Mammary epithelial cell (primary cell): ENCODE measurements at regions of chr11 and their contacts with region 1.

Region 1: DNA sequence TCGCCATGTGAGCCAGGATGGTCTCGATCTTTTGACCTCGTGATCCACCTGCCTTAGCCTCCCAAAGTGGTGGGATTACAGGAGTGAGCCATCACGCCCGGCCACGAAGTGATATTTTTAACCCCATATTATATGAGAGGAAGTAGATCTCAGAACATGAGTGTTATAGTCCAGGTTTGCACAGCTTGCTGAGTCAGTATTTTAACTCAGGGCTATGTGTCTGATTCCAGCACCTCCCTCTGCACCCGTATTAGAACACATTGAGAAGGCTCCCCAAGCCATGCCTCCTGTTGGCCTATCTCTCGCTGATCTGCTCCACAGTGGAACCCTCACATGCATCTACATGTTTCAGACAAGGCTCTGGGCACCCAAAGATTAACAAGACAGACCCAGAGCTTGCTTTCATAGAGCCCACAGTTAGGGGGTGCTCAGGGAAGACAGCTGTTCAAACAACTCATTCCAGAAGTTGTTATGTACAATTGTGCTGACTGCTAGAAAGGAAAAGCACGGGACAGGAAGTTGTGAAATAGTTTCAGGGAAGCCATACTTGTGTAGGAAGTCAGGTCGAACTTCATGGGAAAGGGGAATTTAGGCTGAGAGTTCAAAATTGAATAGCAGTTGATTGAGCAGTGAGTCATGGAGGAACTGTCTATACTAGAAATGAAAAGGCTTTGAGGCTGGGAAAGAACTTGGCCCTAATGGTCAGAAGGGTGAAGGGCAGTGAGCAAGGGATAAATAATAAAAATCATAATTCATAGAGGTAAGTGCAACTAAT is 49.3 kb upstream of the CLPB start:
- DNase-seq: peak; percentile 56
- H3K4me3 ChIP-seq: no peak overlapping the region
- H3K27ac ChIP-seq: no peak overlapping the region
- H3K4me1 ChIP-seq: peaks cover 9% of the 10 kb centered on the region
- H3K27me3 ChIP-seq: no peaks in the 10 kb centered on the region
- CTCF ChIP-seq: no peak

Region 2: DNA sequence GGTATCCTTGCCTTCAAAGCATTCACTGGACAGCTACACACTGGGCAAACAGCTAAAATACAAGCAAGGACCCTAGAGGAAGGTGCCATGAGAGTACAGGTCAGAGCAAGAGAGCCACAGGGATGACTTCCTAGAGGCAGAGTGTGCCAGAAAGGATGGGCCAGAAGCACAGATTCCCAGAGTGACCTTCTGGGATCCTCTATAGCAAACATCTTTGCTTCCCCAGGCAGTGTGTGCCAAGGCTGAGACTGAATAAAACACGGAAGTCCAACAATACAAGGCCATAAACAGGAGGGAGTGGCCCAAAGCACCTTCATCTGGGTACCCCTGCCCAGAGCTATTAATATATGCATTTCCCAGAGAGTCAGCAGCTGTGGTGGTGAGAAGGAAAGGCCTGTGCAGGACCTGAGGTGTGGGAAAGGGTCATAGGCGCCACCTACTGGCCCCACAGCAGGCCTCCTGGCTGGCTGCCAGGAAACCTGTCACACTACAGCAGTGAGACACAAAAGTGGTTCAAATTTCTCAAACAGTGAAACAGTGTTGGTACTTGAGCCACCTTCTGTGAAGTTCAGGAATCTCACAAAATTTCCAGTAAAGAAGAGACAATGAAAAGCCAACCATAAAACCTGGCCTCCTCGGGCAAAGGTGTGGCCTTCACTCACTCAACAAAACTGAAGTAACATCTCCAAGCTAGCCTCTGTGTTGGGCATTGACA is 69.5 kb before region 1 on chr11:
- CTCF ChIA-PET with region 1: no interaction called
- dilution Hi-C with region 1: no loop called
- in situ Hi-C with region 1: no loop called
- intact Hi-C with region 1: no loop called
- DNase-seq: peak; percentile 62
- H3K4me3 ChIP-seq: no peak overlapping the region
- H3K27ac ChIP-seq: no peak overlapping the region
- H3K4me1 ChIP-seq: no peaks in the 10 kb centered on the region
- H3K27me3 ChIP-seq: no peaks in the 10 kb centered on the region
- CTCF ChIP-seq: peak; percentile 79 to 94

Region 3: GRCh38 chr11:72573072-72573854 is 89.7 kb after region 1 on chr11:
- CTCF ChIA-PET with region 1: no interaction called
- dilution Hi-C with region 1: no loop called
- in situ Hi-C with region 1: loop called (anchors 5 kb)
- intact Hi-C with region 1: loop called (anchors 1 kb)
- DNase-seq: no peak
- H3K4me3 ChIP-seq: no peak overlapping the region
- H3K27ac ChIP-seq: no peak overlapping the region
- H3K4me1 ChIP-seq: peaks cover 29% of the 10 kb centered on the region
- H3K27me3 ChIP-seq: no peaks in the 10 kb centered on the region
- CTCF ChIP-seq: peak; percentile 60 to 79

Region 4: DNA sequence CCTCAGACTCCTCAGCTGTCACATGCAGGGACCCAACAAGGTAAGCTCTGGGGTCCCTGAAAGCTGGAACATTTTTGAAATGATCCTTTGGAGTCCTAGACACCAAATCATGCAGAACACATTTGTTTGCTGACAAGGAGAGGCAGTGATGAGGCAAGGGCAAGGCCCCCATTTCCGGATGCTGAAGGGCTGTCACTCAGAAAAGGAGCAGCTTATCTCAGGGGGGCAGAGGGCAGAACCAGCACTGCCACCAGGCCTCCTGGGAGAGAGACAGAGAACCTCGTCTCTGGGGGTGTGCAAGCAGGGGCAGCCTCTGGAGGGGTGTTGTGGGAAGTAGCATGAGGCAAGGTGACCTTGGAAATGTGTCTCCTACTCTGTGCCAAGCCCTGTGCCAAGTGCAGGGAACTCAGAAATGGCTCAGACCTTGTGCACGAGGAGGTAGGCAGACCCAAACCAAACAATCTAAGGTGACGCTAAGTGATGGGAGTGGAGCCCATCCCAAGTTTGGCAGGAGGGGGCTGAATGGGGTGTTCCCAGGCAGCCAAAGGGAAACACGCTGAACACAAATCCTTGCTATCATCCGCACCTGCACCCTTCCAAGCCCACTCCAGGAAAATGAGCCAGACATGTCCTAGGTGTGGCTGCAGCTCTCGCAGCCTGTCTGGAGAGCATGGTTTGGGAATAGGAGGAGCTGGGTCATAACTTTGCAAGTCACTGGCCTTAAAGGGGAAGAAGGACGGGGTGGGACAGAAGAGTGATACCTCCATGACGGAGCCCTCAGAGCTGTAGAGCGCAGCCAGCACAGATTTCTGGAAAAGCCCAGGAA is 96.4 kb after region 1 on chr11:
- CTCF ChIA-PET with region 1: no interaction called
- dilution Hi-C with region 1: no loop called
- in situ Hi-C with region 1: loop called in 1 of 2 experiments (anchors 5 kb)
- intact Hi-C with region 1: loop called (anchors 5 kb)
- DNase-seq: no peak
- H3K4me3 ChIP-seq: no peak overlapping the region
- H3K27ac ChIP-seq: no peak overlapping the region
- H3K4me1 ChIP-seq: no peaks in the 10 kb centered on the region
- H3K27me3 ChIP-seq: no peaks in the 10 kb centered on the region
- CTCF ChIP-seq: no peak

Region 5: DNA sequence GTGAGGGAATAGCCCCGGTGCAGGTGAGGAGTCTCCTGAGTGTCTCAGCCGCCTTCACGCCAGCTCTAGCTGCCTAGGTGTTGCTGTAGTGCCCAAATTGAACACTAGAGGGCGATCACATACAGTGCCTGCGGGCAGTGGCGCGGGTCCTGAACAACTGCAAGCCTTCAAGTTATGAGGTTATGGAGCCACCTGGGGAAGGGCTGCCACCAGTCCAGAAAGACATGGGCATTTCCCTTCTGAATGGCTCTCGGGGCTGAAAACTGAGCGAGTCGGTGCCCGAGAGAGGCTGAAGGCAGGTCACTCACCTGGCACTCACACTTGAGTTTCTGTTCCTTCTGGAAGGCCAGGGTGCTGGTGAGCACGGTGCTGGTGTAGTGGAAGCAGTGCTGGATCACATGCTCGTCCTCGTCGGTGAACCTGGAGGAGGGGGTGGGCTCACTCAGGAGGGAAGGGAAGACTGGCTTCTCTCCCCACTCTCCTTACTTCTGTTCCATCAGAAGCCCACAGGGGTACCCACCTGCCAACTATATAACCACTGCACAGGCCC is 102.2 kb after region 1 on chr11:
- CTCF ChIA-PET with region 1: no interaction called
- dilution Hi-C with region 1: no loop called
- in situ Hi-C with region 1: no loop called
- intact Hi-C with region 1: loop called (anchors 5 kb)
- DNase-seq: peak; percentile 53
- H3K4me3 ChIP-seq: no peak overlapping the region
- H3K27ac ChIP-seq: no peak overlapping the region
- H3K4me1 ChIP-seq: peaks cover 8% of the 10 kb centered on the region
- H3K27me3 ChIP-seq: peaks cover 10% of the 10 kb centered on the region
- CTCF ChIP-seq: peak; percentile 80 to 83

Region 6: DNA sequence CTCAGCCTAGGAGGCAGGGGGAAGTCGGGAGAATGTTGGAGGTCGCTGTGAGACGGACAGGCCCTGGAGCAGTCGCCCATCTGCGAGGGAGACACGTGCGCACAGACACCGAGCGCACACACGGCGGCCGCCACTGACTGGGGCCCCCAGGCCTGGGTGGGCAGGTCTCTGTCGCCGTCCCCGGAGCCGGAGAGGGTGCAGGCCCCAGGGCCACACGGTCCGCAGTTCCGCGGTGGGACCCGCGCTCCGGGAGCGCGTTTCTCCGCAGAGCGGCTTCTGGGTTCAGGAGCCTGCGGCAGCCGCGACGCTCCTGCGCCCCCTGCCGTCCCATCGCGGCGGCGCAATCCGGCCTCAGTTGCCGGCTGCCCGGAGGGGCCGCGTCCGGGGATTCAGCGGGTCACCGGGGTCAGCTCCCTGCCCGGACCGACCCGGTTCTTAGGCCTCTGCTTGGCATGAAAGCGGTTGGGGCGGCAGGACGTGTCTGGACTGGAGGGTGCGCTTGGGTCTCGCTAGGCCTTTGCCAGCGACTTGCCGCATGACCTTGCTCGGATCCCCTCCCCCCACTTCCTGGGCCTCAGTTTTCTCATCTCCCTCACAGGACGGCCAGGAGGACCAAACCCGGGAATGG is 159.4 kb after region 1 on chr11:
- CTCF ChIA-PET with region 1: no interaction called
- dilution Hi-C with region 1: no loop called
- in situ Hi-C with region 1: no loop called
- intact Hi-C with region 1: loop called (anchors 1 kb)
- DNase-seq: no peak
- H3K4me3 ChIP-seq: peak overlapping the region in 2 of 3 experiments; percentile 55 to 66
- H3K27ac ChIP-seq: no peak overlapping the region
- H3K4me1 ChIP-seq: peaks cover 10% of the 10 kb centered on the region
- H3K27me3 ChIP-seq: peaks cover 5% of the 10 kb centered on the region
- CTCF ChIP-seq: peak; percentile 49 to 88

Region 7: GRCh38 chr11:72683782-72684200 is 200.2 kb after region 1 on chr11:
- CTCF ChIA-PET with region 1: no interaction called
- dilution Hi-C with region 1: no loop called
- in situ Hi-C with region 1: no loop called
- intact Hi-C with region 1: loop called (anchors 1 kb)
- DNase-seq: no peak
- H3K4me3 ChIP-seq: no peak overlapping the region
- H3K27ac ChIP-seq: no peak overlapping the region
- H3K4me1 ChIP-seq: peaks cover 4% of the 10 kb centered on the region
- H3K27me3 ChIP-seq: no peaks in the 10 kb centered on the region
- CTCF ChIP-seq: peak; percentile 88 to 94